K562 (cell line): ENCODE measurements at regions of chr2 and their contacts with region 1.

Region 1: DNA sequence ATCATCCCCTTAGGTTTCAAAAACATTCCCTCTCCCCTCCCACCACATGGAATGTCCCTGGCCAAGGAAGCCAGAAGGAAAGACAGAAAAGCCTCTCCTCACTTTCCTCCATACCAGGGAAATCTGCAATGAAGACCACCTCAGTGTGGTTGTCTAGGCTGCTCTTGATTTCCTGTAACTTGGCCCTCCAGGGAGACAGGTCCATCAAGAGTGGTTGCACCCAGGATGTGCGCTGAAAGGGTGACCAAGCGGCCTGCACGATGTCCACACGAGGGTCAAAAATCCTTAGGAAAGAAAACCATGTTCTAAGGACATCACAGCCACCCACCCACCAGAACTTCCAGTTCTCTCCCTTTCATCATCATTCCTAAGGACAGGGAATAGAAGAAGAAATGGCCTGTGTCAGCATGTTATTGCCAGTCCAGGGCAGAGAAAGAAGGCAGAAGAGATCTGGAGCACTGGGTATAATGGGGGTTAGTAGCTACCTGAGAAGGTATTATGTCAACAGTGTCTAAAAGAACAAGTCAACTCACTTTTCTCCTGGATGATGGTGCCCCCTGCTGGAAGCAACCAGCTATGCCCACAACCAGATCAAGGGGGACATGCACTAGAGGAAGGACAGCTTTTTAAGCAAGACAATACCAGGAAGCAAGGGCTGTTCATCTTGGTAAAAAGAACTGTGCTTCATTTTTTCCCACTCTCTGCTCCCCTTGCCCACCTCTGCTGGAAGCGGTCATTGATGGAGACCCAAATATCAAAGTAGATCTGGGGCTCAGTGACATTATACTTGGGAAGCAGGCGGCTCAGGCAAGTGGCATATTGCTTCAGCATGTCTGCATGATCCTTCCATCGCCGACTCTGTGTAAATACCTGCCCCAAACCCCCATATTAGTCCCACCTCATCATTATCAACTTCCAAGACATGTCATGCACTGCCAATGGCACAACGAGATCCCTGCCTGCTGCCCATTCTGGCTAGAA is 9.3 kb downstream of the GGCX start:
- DNase-seq: peak; percentile 64 to 88 (median 72)
- ATAC-seq: peak; percentile 81
- H3K4me3 ChIP-seq: no peak overlapping the region
- H3K27ac ChIP-seq: no peak overlapping the region; the same call in 2 of the 3 replicates
- H3K4me1 ChIP-seq: no peaks in the 10 kb centered on the region; a peak in 1 of 5 replicates
- H3K27me3 ChIP-seq: no peaks in the 10 kb centered on the region
- CTCF ChIP-seq: peak; percentile 83 to 95 (median 91)
- EP300 ChIP-seq: no peak
- POLR2A ChIP-seq: no peak
- RAD21 ChIP-seq: peak; percentile 97 to 98

Region 2: DNA sequence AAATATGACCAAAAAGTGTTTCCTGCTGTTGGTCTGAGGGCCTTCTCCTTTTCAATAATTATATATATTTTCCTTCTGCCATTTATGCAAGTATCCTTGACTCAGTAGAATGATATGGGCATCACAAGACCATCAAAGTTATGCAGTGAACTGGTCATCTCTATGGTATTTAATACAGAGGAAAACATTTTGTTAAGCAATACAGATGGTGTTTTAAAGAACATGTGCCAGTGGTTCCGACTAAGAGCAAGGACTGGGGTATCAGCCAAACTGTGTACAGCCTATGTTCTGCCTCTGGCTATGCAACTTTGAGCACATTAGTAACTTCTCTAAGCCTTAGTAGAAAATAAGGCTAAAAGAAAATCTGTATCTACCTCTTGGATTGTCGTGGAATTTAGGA is 850.1 kb before region 1 on chr2:
- CTCF ChIA-PET with region 1: no interaction called
- POLR2A ChIA-PET with region 1: no interaction called
- in situ Hi-C with region 1: no loop called
- intact Hi-C with region 1: no loop called
- DNase-seq: no peak
- ATAC-seq: no peak
- H3K4me3 ChIP-seq: no peak overlapping the region
- H3K27ac ChIP-seq: no peak overlapping the region
- H3K4me1 ChIP-seq: no peaks in the 10 kb centered on the region
- H3K27me3 ChIP-seq: no peaks in the 10 kb centered on the region
- CTCF ChIP-seq: no peak
- EP300 ChIP-seq: no peak
- POLR2A ChIP-seq: no peak
- RAD21 ChIP-seq: no peak

Region 3: DNA sequence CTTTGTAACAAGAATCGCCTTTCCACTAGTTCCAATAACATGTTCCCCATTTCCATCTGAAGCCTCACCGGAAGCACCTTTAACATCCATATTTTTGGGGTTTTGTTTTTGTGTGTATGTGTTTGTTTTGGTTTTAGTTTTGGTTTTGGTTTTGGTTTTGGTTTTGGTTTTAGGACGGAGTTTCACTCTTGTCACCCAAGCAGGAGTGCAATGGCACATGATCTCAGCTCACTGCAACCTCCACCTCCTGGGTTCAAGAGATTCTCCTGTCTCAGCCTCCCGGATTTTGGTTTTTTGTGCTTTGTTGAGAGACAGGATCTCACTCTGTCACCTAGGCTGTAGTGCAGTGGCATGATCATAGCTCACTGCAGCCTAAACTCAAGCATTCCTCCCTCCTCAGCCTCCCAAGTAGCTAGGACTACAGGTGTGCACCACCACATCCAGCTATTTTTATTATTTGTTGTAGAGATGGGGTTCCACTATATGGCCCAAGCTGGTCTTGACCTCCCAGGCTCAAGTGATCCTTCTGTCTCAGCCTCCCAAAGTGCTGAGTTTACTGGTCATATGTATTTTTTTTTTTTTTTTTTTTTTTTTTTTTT is 260.5 kb before region 1 on chr2:
- CTCF ChIA-PET with region 1: no interaction called
- POLR2A ChIA-PET with region 1: no interaction called
- in situ Hi-C with region 1: no loop called
- intact Hi-C with region 1: no loop called
- DNase-seq: no peak
- ATAC-seq: no peak
- H3K4me3 ChIP-seq: no peak overlapping the region
- H3K27ac ChIP-seq: no peak overlapping the region
- H3K4me1 ChIP-seq: no peaks in the 10 kb centered on the region
- H3K27me3 ChIP-seq: peaks cover 48 to 60% of the 10 kb centered on the region in 2 experiments
- CTCF ChIP-seq: no peak
- EP300 ChIP-seq: no peak
- POLR2A ChIP-seq: no peak
- RAD21 ChIP-seq: no peak

Region 4: DNA sequence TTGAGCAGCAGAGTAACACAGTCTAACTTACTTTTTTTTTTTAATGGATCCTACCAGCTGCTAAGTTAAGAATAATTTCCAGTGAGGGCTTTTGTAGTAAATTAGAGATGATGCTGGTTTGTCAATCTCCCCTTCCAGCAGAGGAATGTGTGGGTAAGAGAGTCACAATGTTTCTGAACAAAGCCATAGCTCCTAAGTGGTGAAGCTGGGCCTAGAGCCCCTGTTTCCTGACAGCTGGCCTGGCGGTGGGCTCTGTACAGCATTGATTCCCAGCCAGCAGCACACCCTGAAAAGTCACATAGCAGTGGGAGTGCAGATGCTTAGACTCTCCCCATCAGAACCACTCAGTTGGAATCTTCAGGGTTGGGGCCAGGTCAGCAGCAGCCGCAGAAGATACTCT is 166.2 kb before region 1 on chr2:
- CTCF ChIA-PET with region 1: interaction called, 32 read pairs
- POLR2A ChIA-PET with region 1: interaction called, 1,576 read pairs
- in situ Hi-C with region 1: no loop called
- intact Hi-C with region 1: no loop called
- DNase-seq: no peak
- ATAC-seq: no peak
- H3K4me3 ChIP-seq: no peak overlapping the region
- H3K27ac ChIP-seq: no peak overlapping the region
- H3K4me1 ChIP-seq: peaks cover 0 to 2% of the 10 kb centered on the region in 2 experiments; a peak in 3 of 5 replicates
- H3K27me3 ChIP-seq: no peaks in the 10 kb centered on the region
- CTCF ChIP-seq: no peak
- EP300 ChIP-seq: no peak
- POLR2A ChIP-seq: no peak
- RAD21 ChIP-seq: no peak

Region 5: GRCh38 chr2:85390941-85391669 is 160.9 kb before region 1 on chr2:
- CTCF ChIA-PET with region 1: interaction called, 32 read pairs
- POLR2A ChIA-PET with region 1: interaction called, 1,576 read pairs
- in situ Hi-C with region 1: no loop called
- intact Hi-C with region 1: loop called (anchors 1 kb)
- DNase-seq: peak; percentile 79 to 85 (median 81)
- ATAC-seq: peak; percentile 96
- H3K4me3 ChIP-seq: no peak overlapping the region
- H3K27ac ChIP-seq: no peak overlapping the region
- H3K4me1 ChIP-seq: peaks cover 0 to 5% of the 10 kb centered on the region in 2 experiments; a peak in 1 of 5 replicates
- H3K27me3 ChIP-seq: no peaks in the 10 kb centered on the region
- CTCF ChIP-seq: peak; percentile 88 to 92 (median 91)
- EP300 ChIP-seq: no peak
- POLR2A ChIP-seq: no peak
- RAD21 ChIP-seq: peak; percentile 96 to 97

Region 6: GRCh38 chr2:85694052-85695025 is 142.4 kb after region 1 on chr2 and contains the start of gene GNLY:
- CTCF ChIA-PET with region 1: no interaction called
- POLR2A ChIA-PET with region 1: no interaction called
- in situ Hi-C with region 1: no loop called
- intact Hi-C with region 1: no loop called
- DNase-seq: no peak
- ATAC-seq: no peak
- H3K4me3 ChIP-seq: no peak within 1 kb of the TSS
- H3K27ac ChIP-seq: no peak within 1 kb of the TSS
- H3K4me1 ChIP-seq: peaks cover 0 to 9% of the 10 kb centered on the region in 2 experiments; a peak in 2 of 5 replicates
- H3K27me3 ChIP-seq: peaks cover 8 to 12% of the 10 kb centered on the region in 2 experiments; a peak in 3 of 5 replicates
- CTCF ChIP-seq: no peak
- EP300 ChIP-seq: no peak
- POLR2A ChIP-seq: no peak
- RAD21 ChIP-seq: no peak
- polyA plus RNA-seq, gene GNLY: not detected